Activated CD4-positive, alpha-beta memory T cell treated with anti-CD3 and anti-CD28 coated beads for 36 hours (primary cell): ENCODE measurements at regions of chr2 and their contacts with region 1.

Region 1: DNA sequence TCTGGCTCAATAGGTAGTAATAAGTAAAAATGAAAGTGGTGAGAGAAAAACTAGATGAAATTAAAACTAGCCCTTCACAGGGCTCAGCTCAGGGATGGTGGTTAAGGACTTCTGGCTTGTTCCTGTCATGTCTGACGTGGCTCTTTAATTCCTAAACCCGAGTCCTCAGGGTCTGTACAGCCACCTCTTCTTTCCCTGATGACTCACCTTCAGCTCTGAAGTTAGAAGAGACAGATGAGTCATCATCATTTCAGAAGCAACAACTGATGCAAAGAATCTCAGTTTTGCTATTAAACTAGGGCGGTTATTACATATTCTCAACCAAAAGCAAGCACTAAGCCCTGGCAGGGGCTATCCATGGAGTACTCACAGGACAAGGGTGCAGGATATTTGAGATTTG is 24.0 kb upstream of the ITGB6 start:
- DNase-seq: peak; percentile 54
- H3K4me3 Mint-ChIP-seq: peak overlapping the region; percentile 45
- H3K27ac Mint-ChIP-seq: peak overlapping the region; percentile 73
- H3K4me1 Mint-ChIP-seq: peaks cover 64% of the 10 kb centered on the region
- H3K27me3 Mint-ChIP-seq: peaks cover 16% of the 10 kb centered on the region

Region 2: DNA sequence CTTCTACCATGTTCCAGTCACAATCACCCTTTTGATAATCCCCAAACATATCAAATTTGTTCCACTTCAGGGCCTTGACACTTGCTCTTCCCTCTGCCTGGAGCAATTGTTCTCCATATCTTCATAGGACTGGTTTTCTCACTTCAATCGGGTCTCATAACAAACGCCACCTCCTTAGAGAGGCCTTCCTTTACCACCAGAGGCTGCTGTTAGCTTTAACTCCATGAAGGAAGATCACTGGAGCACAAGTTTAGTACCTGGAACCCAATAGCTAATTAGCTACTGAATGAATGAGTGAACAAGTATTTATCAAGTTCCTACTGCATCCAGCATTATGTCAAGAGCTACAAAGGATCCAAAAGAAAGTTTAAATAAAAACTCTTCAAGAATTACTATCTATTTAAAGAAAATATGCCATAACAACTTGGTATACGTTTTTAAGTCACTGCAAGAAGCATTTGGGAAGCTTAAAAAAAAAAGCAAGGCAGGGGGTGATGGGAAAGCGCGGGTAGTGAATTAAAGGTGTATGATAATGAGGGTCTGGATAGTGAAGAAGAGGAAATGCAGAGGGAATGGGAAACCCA is 666.5 kb before region 1 on chr2:
- CTCF ChIA-PET with region 1: no interaction called
- POLR2A ChIA-PET with region 1: no interaction called
- intact Hi-C with region 1: no loop called
- DNase-seq: no peak
- H3K4me3 Mint-ChIP-seq: no peak overlapping the region
- H3K27ac Mint-ChIP-seq: no peak overlapping the region
- H3K4me1 Mint-ChIP-seq: no peaks in the 10 kb centered on the region
- H3K27me3 Mint-ChIP-seq: no peaks in the 10 kb centered on the region

Region 3: GRCh38 chr2:159895258-159896065 is 328.6 kb before region 1 on chr2:
- CTCF ChIA-PET with region 1: no interaction called
- POLR2A ChIA-PET with region 1: no interaction called
- intact Hi-C with region 1: loop called (anchors 5 kb)
- DNase-seq: peak; percentile 47
- H3K4me3 Mint-ChIP-seq: peak overlapping the region; percentile 50
- H3K27ac Mint-ChIP-seq: peak overlapping the region; percentile 89
- H3K4me1 Mint-ChIP-seq: peaks cover 94% of the 10 kb centered on the region
- H3K27me3 Mint-ChIP-seq: no peaks in the 10 kb centered on the region

Region 4: DNA sequence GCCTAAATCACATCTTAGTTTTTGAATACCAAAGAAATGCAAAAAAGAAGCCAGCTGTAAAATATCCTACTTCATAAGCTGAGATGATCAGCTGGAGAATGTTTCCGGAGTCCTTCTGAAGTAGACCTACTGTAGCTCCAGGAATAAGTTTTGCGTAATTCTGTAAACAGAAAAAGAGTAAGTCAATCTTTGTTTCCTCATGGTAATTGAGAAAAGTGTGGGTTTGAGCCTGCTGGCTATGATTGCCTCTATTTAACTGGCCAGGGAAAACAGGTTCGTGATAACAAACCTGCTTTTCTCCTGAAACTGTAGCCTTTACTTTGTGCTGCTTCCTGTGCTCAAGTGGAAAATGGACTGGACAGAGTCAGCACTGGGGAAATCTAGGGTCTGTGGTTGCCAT is 82.1 kb before region 1 on chr2:
- CTCF ChIA-PET with region 1: no interaction called
- POLR2A ChIA-PET with region 1: no interaction called
- intact Hi-C with region 1: no loop called
- DNase-seq: no peak
- H3K4me3 Mint-ChIP-seq: no peak overlapping the region
- H3K27ac Mint-ChIP-seq: no peak overlapping the region
- H3K4me1 Mint-ChIP-seq: no peaks in the 10 kb centered on the region
- H3K27me3 Mint-ChIP-seq: peaks cover 10% of the 10 kb centered on the region

Region 5: GRCh38 chr2:160294339-160294803 is 70.3 kb after region 1 on chr2:
- CTCF ChIA-PET with region 1: no interaction called
- POLR2A ChIA-PET with region 1: no interaction called
- intact Hi-C with region 1: loop called (anchors 1 kb)
- DNase-seq: peak; percentile 68
- H3K4me3 Mint-ChIP-seq: no peak overlapping the region
- H3K27ac Mint-ChIP-seq: peak overlapping the region; percentile 18
- H3K4me1 Mint-ChIP-seq: peaks cover 76% of the 10 kb centered on the region
- H3K27me3 Mint-ChIP-seq: no peaks in the 10 kb centered on the region

Region 6: DNA sequence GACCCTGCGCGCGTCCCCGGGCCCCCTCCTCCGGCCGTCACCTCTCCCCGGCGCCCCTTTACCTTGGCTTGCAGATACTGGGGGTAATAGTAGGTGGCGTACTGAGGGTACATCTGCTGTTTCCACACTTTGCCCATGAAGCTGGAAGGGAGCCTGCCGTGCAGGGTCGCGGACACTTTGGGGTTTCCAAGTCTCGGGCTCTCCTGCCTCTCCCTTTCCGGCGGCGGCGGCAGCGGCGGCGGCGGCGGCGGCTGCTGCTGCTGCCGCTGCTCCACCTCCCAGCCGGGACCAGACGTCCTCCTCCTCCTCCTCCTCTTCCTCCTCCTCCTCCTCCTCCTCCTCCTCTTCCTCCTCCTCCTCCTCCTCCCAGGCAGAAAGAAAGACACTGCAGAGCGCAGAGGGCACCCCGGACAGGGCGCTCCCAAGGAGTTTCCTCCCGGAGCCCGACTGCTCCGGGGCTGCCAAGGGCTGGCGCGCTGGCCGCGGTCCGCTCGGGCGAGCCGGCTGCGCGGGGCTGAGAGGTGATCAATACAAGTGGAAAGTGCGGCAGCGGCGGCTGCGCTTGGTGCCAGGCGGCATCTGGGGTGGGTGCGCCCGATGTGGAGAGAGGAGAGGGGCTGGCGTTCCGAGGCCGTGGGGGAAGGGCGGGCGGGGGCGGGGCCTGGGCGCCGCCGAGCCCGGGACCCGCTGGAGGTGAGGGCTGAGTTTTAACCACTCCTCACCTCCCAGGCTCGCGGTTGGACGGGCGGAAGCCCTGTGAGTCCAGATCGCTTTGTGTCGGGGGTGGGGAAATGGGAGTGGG is 269.4 kb after region 1 on chr2 and contains the start of gene RBMS1:
- CTCF ChIA-PET with region 1: no interaction called
- POLR2A ChIA-PET with region 1: no interaction called
- intact Hi-C with region 1: loop called (anchors 5 kb)
- DNase-seq: peak; percentile 59
- H3K4me3 Mint-ChIP-seq: peak within 1 kb of the TSS; percentile 95
- H3K27ac Mint-ChIP-seq: peak within 1 kb of the TSS; percentile 93
- H3K4me1 Mint-ChIP-seq: peaks cover 36% of the 10 kb centered on the region
- H3K27me3 Mint-ChIP-seq: no peaks in the 10 kb centered on the region
- total RNA-seq, gene RBMS1: 37.9 to 40.0 TPM

Region 7: DNA sequence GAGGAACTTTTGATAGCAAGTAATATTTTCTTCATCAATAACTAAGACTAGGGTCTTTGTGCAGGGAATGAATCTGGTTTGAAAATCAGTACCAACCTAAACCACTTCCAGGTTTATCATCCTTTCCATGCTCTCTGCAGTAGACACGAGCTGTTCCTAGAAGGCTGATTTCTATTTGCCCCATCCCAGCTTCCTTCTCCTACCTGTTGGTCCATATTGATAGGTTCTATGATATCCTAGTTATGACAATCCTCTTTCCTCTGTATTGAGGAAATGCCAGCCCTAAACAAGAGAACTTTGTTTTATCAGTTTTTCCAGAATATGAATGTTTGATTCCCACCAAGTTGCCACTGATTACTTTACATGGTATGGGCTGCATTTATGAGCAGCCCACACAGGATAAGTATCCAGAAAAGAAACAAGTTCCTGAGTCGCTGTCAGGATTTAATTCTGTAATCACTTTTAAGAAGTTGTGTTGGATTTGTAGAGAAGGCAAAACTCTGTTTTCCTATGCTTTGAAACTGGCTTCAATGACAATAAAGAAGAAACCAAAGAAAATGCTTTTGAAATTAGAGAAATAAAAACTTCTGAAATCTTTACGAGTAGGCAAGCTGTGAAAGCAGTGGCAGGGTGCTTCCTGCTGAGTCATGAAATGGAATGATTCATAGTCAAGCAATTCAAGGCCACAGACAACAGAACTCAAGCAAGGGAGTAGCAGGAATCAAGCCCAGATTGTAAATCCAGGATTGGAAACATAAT is 898.9 kb after region 1 on chr2:
- CTCF ChIA-PET with region 1: no interaction called
- POLR2A ChIA-PET with region 1: no interaction called
- intact Hi-C with region 1: loop called (anchors 5 kb)
- DNase-seq: peak; percentile 62
- H3K4me3 Mint-ChIP-seq: peak overlapping the region; percentile 17
- H3K27ac Mint-ChIP-seq: peak overlapping the region; percentile 58
- H3K4me1 Mint-ChIP-seq: peaks cover 24% of the 10 kb centered on the region
- H3K27me3 Mint-ChIP-seq: no peaks in the 10 kb centered on the region